Activated T-helper 2 cell treated with anti-CD3 and anti-CD28 coated beads, Interferon-gamma antibody, Interleukin-2, Interleukin-4, amounts not matched to agents 10 μg/mL and 5 μg/mL and 100 μg/mL, durations not matched to agents 14 hours and 24 hours and 36 hours (primary cell): ENCODE measurements at regions of chrX and their contacts with region 1.

Region 1: GRCh38 chrX:9899640-9900111 is 67.5 kb upstream of the CLDN34 start:
- DNase-seq: no peak
- H3K4me3 Mint-ChIP-seq: no peak overlapping the region
- H3K27ac Mint-ChIP-seq: no peak overlapping the region
- H3K4me1 Mint-ChIP-seq: peaks cover 5% of the 10 kb centered on the region
- H3K27me3 Mint-ChIP-seq: peaks cover 24% of the 10 kb centered on the region

Region 2: DNA sequence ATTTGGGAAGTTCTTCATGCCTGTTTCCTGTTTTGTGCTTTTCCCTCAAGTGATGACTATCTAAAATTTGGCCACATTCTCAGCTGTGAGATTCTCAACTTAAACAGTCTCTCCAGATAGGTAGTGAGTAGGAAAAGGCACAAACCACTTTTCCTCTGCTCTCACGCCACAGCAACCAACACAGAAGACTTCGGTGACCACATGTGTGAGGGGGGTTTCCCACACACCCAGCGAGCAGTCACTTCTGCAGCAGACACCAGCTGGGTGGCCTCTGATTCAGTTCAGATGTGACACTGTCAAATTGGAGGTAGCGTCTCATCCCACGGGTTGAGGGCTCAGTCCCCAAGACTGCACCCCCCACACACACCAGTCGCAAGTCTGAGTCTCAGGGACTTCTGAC is 42.4 kb after region 1 on chrX:
- intact Hi-C with region 1: loop called (anchors 2 kb)
- DNase-seq: peak; percentile 44
- H3K4me3 Mint-ChIP-seq: no peak overlapping the region
- H3K27ac Mint-ChIP-seq: peak overlapping the region; percentile 4
- H3K4me1 Mint-ChIP-seq: peaks cover 22% of the 10 kb centered on the region
- H3K27me3 Mint-ChIP-seq: peaks cover 24% of the 10 kb centered on the region